B cell (primary cell): ENCODE measurements at regions of chr2 and their contacts with region 1.

Region 1: DNA sequence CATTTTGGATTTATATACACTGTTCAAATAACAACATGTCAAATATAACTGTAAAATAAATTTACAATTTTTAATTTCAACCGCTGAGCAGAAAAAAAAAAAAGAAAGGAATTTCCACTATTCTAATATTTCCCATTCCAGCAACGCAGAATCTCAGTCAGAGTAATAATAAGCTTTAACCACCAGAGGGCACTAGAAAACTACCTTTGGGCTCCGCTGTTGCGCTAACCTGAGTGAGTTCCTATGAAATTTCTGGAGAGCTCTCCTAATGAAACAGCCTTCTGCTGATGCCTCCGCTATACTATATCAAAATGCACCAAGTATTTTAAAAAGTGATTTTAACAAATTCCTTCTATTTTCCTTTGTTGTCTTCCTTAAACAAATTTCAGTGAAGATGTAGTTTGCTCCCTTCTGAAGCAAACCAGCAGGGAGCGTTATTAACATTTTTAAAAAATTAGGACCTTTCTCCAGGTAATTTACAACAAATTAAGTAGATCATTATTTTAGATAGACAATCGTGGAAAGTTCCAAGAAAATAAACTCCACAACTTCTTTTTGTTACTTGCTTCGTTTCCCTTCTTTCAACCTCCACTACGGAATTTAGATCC is 23.0 kb downstream of the ERMN start:
- DNase-seq: peak; percentile 68
- ATAC-seq: peak; percentile 65
- H3K4me3 ChIP-seq: no peak overlapping the region
- H3K4me3 Mint-ChIP-seq: no peak overlapping the region
- H3K27ac ChIP-seq: no peak overlapping the region
- H3K27ac Mint-ChIP-seq: no peak overlapping the region
- H3K4me1 ChIP-seq: no peaks in the 10 kb centered on the region
- H3K4me1 Mint-ChIP-seq: peaks cover 1% of the 10 kb centered on the region
- H3K27me3 ChIP-seq: no peaks in the 10 kb centered on the region
- H3K27me3 Mint-ChIP-seq: peaks cover 4% of the 10 kb centered on the region
- CTCF ChIP-seq: peak; percentile 98

Region 2: GRCh38 chr2:157291009-157291408 is 11.6 kb before region 1 on chr2:
- CTCF ChIA-PET with region 1: interaction called, 11 read pairs
- POLR2A ChIA-PET with region 1: no interaction called
- intact Hi-C with region 1: no loop called
- DNase-seq: no peak
- ATAC-seq: no peak
- H3K4me3 ChIP-seq: no peak overlapping the region
- H3K4me3 Mint-ChIP-seq: no peak overlapping the region
- H3K27ac ChIP-seq: no peak overlapping the region
- H3K27ac Mint-ChIP-seq: no peak overlapping the region
- H3K4me1 ChIP-seq: no peaks in the 10 kb centered on the region
- H3K4me1 Mint-ChIP-seq: no peaks in the 10 kb centered on the region
- H3K27me3 ChIP-seq: no peaks in the 10 kb centered on the region
- H3K27me3 Mint-ChIP-seq: peaks cover 7% of the 10 kb centered on the region
- CTCF ChIP-seq: no peak

Region 3: GRCh38 chr2:157336137-157337010 is 33.8 kb after region 1 on chr2:
- CTCF ChIA-PET with region 1: interaction called, 16 read pairs
- POLR2A ChIA-PET with region 1: no interaction called
- intact Hi-C with region 1: no loop called
- DNase-seq: peak; percentile 68
- ATAC-seq: no peak
- H3K4me3 ChIP-seq: peak overlapping the region in 1 of 5 experiments; percentile 37
- H3K4me3 Mint-ChIP-seq: no peak overlapping the region
- H3K27ac ChIP-seq: no peak overlapping the region
- H3K27ac Mint-ChIP-seq: no peak overlapping the region
- H3K4me1 ChIP-seq: peaks cover 6% of the 10 kb centered on the region in 2 donors
- H3K4me1 Mint-ChIP-seq: peaks cover 7% of the 10 kb centered on the region
- H3K27me3 ChIP-seq: no peaks in the 10 kb centered on the region
- H3K27me3 Mint-ChIP-seq: no peaks in the 10 kb centered on the region
- CTCF ChIP-seq: peak; percentile 86

Region 4: GRCh38 chr2:157509744-157510143 is 207.1 kb after region 1 on chr2:
- CTCF ChIA-PET with region 1: interaction called, 13 read pairs
- POLR2A ChIA-PET with region 1: no interaction called
- intact Hi-C with region 1: no loop called
- DNase-seq: no peak
- ATAC-seq: no peak
- H3K4me3 ChIP-seq: no peak overlapping the region
- H3K4me3 Mint-ChIP-seq: no peak overlapping the region
- H3K27ac ChIP-seq: no peak overlapping the region
- H3K27ac Mint-ChIP-seq: no peak overlapping the region
- H3K4me1 ChIP-seq: peaks cover 4 to 6% of the 10 kb centered on the region in 2 donors
- H3K4me1 Mint-ChIP-seq: peaks cover 5% of the 10 kb centered on the region
- H3K27me3 ChIP-seq: peaks cover 0 to 3% (median 0%) of the 10 kb centered on the region in 4 experiments
- H3K27me3 Mint-ChIP-seq: peaks cover 6% of the 10 kb centered on the region
- CTCF ChIP-seq: no peak

Region 5: GRCh38 chr2:157603198-157603597 is 300.6 kb after region 1 on chr2:
- CTCF ChIA-PET with region 1: interaction called, 197 read pairs
- POLR2A ChIA-PET with region 1: interaction called, 3 read pairs
- intact Hi-C with region 1: no loop called
- DNase-seq: no peak
- ATAC-seq: no peak
- H3K4me3 ChIP-seq: no peak overlapping the region
- H3K4me3 Mint-ChIP-seq: no peak overlapping the region
- H3K27ac ChIP-seq: no peak overlapping the region
- H3K27ac Mint-ChIP-seq: no peak overlapping the region
- H3K4me1 ChIP-seq: no peaks in the 10 kb centered on the region
- H3K4me1 Mint-ChIP-seq: no peaks in the 10 kb centered on the region
- H3K27me3 ChIP-seq: no peaks in the 10 kb centered on the region
- H3K27me3 Mint-ChIP-seq: peaks cover 14% of the 10 kb centered on the region
- CTCF ChIP-seq: no peak

Region 6: DNA sequence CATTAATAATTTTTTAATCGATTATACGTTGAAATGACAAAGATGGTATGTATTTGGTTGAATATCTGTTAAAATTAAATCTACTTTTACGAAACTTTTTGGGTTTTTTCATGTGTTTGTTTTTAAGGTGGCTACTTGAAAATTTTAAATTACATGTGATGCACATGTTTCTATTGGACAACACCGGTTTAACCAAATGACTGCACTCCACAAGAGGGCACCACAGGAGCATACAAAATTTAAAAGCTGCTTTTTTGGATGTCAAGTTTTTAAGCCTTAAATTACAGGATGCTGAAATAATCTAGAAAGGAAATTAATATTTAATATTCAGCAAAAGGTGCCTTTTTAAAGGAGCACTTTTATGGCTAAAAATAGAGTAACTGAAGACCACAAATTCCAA is 474.8 kb after region 1 on chr2:
- CTCF ChIA-PET with region 1: interaction called, 6 read pairs
- POLR2A ChIA-PET with region 1: no interaction called
- intact Hi-C with region 1: loop called (anchors 1 kb)
- DNase-seq: peak; percentile 21
- ATAC-seq: no peak
- H3K4me3 ChIP-seq: no peak overlapping the region
- H3K4me3 Mint-ChIP-seq: no peak overlapping the region
- H3K27ac ChIP-seq: no peak overlapping the region
- H3K27ac Mint-ChIP-seq: no peak overlapping the region
- H3K4me1 ChIP-seq: no peaks in the 10 kb centered on the region
- H3K4me1 Mint-ChIP-seq: no peaks in the 10 kb centered on the region
- H3K27me3 ChIP-seq: no peaks in the 10 kb centered on the region
- H3K27me3 Mint-ChIP-seq: no peaks in the 10 kb centered on the region
- CTCF ChIP-seq: peak; percentile 56

Region 7: DNA sequence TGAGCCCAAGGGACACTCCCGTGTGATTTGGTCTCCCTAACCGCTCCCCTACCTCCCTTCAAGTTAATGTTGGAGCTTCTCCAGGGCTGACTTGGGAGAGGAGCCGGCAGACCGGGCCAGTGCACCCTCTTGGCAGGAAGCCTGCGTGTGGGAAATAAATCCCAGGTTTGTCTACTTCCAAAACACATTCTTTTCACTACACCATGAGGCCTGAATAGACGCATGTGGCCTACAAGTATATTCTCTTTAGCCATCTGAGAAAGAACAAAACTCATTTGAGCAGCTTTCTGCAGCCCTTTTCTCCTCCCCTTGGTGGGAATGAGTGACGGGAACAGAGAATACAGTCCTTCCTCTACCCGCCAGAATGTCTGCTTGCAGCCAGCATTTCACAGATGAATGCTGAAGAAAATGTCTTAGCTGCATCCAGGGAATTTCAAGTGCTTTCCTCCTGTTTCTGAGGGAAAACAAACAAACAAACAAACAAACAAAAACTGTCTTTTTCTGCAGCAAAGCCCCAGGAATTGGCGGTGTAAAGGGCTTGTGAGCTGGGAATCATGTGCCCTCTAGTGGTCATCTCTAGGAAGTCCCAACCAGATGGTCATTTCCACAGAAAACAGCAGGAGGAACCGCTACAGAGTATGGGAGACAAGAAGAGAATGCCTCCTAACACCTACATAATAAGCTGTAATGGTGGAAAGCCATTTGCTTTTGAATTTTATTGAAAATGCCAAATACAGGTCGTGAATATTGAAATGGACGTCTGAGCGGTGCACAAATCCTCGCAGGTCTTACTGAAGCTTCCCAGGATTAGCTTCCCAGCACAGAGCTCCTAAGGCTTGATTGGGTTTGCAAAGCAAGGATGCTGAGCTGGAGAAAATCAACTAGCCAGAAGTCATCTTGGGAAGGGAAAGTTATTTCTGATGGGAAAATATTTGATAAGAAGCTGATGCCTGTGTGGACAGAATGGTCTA is 1451.3 kb after region 1 on chr2:
- CTCF ChIA-PET with region 1: interaction called, 32 read pairs
- POLR2A ChIA-PET with region 1: no interaction called
- intact Hi-C with region 1: loop called (anchors 1 kb)
- DNase-seq: peak; percentile 61
- ATAC-seq: peak; percentile 62
- H3K4me3 ChIP-seq: no peak overlapping the region
- H3K4me3 Mint-ChIP-seq: no peak overlapping the region
- H3K27ac ChIP-seq: no peak overlapping the region
- H3K27ac Mint-ChIP-seq: no peak overlapping the region
- H3K4me1 ChIP-seq: no peaks in the 10 kb centered on the region
- H3K4me1 Mint-ChIP-seq: no peaks in the 10 kb centered on the region
- H3K27me3 ChIP-seq: peaks cover 0 to 7% (median 1%) of the 10 kb centered on the region in 4 experiments
- H3K27me3 Mint-ChIP-seq: peaks cover 20% of the 10 kb centered on the region
- CTCF ChIP-seq: peak; percentile 93